Left lung (tissue), 14 donors: ENCODE measurements at regions of chr6 and their contacts with region 1.

Region 1: GRCh38 chr6:168355716-168356449 is 36.3 kb upstream of the DACT2 start:
- DNase-seq: peak in 3 of 4 donors; percentile 46 to 81 (median 70)
- ATAC-seq: peak; percentile 99
- H3K4me3 ChIP-seq: no peak overlapping the region
- H3K27ac ChIP-seq: no peak overlapping the region
- H3K4me1 ChIP-seq: no peaks in the 10 kb centered on the region
- H3K27me3 ChIP-seq: no peaks in the 10 kb centered on the region
- CTCF ChIP-seq: peak; percentile 57 to 61

Region 2: DNA sequence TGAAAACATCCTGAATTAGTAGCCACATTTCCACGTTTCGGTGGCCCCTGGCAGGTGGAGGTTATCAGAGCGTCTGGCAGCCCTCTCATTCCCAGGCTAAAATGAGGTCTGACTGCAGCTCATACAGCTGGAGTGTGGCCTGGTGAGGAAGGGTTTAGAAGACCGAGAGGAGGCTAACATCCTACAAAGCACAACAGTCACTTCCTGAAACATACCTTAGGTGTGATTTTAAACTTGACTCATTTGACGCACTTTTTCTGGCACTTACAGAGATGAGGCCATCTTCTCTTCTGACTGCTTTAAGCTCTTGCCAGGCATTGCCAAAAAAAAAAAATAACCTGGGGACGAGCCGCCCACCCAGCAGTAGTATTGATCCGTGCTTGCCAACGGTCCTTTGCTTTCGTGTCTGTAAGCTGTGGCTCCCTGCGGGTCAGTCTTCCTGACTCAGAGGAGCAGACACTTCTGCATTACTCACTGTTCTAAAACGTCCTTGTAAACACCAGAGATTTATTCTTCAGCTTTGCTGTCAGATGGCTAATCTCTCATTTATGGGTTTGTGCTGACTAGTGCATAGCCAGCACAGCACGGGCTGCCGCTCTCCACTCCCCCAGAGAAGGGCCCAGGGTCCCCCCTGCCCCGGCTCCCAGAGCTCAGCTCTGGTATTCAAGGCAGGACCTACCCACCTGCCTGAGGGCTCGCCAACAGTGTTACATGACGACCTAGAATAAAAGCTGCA is 198.4 kb before region 1 on chr6:
- intact Hi-C with region 1: loop called in 1 of 2 experiments (anchors 10 kb)
- DNase-seq: no peak
- ATAC-seq: peak; percentile 51
- H3K4me3 ChIP-seq: no peak overlapping the region
- H3K27ac ChIP-seq: no peak overlapping the region
- H3K4me1 ChIP-seq: peaks cover 5 to 6% of the 10 kb centered on the region in 2 donors
- H3K27me3 ChIP-seq: peaks cover 0 to 15% of the 10 kb centered on the region in 2 donors
- CTCF ChIP-seq: no peak

Region 3: DNA sequence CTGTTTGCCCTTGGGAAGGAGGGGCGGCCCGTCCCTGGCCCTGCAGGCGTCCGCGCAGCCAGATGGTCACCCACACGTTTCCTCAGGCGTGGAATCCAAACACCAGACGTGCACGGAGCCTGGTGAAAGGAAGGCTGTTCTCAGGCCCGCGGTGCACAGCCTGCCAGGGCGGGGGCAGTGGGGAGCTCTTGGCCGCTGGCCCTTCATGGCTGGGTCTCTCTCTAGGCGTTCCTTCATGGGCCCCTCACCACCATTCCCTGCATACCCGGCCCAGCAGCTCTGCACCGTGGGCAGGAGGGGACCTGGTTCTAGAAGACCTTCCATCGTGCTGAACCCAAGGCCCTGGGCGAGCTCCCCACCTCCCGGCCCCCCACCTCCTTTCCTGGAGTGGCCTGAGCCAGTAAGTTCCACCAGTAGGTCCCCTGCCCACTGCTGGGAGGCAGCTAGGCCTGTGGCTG is 54.7 kb after region 1 on chr6:
- intact Hi-C with region 1: no loop called
- DNase-seq: peak in 1 of 4 donors; percentile 52
- ATAC-seq: no peak
- H3K4me3 ChIP-seq: no peak overlapping the region
- H3K27ac ChIP-seq: no peak overlapping the region
- H3K4me1 ChIP-seq: no peaks in the 10 kb centered on the region
- H3K27me3 ChIP-seq: no peaks in the 10 kb centered on the region
- CTCF ChIP-seq: no peak